Psoas muscle (tissue), 8 donors: ENCODE measurements at regions of chr17 and their contacts with region 1.

Region 1: GRCh38 chr17:53150101-53150698 is 672.5 kb upstream of the KIF2B start:
- DNase-seq: no peak
- ATAC-seq: peak in 1 of 4 donors; percentile 46
- H3K4me3 ChIP-seq: no peak overlapping the region
- H3K27ac ChIP-seq: no peak overlapping the region
- H3K4me1 ChIP-seq: no peaks in the 10 kb centered on the region
- H3K27me3 ChIP-seq: no peaks in the 10 kb centered on the region
- CTCF ChIP-seq: peak; percentile 53

Region 2: GRCh38 chr17:52383493-52384100 is 766.6 kb before region 1 on chr17:
- intact Hi-C with region 1: loop called in 1 of 2 experiments (anchors 5 kb)
- DNase-seq: no peak
- ATAC-seq: peak; percentile 62 to 85 (median 76)
- H3K4me3 ChIP-seq: no peak overlapping the region
- H3K27ac ChIP-seq: no peak overlapping the region
- H3K4me1 ChIP-seq: no peaks in the 10 kb centered on the region
- H3K27me3 ChIP-seq: no peaks in the 10 kb centered on the region
- CTCF ChIP-seq: peak; percentile 66

Region 3: GRCh38 chr17:52837492-52838272 is 312.5 kb before region 1 on chr17:
- intact Hi-C with region 1: no loop called
- DNase-seq: no peak
- ATAC-seq: no peak
- H3K4me3 ChIP-seq: no peak overlapping the region
- H3K27ac ChIP-seq: no peak overlapping the region
- H3K4me1 ChIP-seq: no peaks in the 10 kb centered on the region
- H3K27me3 ChIP-seq: no peaks in the 10 kb centered on the region
- CTCF ChIP-seq: no peak

Region 4: GRCh38 chr17:53012364-53012763 is 137.8 kb before region 1 on chr17:
- intact Hi-C with region 1: no loop called
- DNase-seq: no peak
- ATAC-seq: no peak
- H3K4me3 ChIP-seq: no peak overlapping the region
- H3K27ac ChIP-seq: no peak overlapping the region
- H3K4me1 ChIP-seq: no peaks in the 10 kb centered on the region
- H3K27me3 ChIP-seq: no peaks in the 10 kb centered on the region
- CTCF ChIP-seq: no peak

Region 5: GRCh38 chr17:53032861-53033271 is 117.3 kb before region 1 on chr17:
- intact Hi-C with region 1: loop called (anchors 2 to 5 kb)
- DNase-seq: no peak
- ATAC-seq: peak; percentile 56 to 80 (median 66)
- H3K4me3 ChIP-seq: no peak overlapping the region
- H3K27ac ChIP-seq: no peak overlapping the region
- H3K4me1 ChIP-seq: no peaks in the 10 kb centered on the region
- H3K27me3 ChIP-seq: no peaks in the 10 kb centered on the region
- CTCF ChIP-seq: peak; percentile 62

Region 6: DNA sequence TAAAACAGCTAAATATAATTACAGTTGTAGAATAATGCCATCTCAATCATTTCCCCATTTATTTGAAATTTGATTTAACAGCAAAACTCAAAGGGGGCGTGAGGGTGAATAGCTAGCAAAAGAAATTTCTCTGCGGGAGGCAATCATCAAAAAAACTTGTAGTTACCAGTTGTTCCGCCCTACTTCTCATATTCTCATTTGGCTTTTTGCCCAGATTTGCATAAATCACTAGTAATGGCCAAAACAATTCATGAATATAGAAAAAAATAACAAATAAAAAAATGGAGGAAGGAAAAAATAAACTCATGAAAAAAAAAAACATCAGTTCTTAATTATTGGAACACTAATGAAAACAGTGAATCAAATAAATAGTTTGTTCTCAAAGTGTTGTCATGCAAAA is 50.1 kb before region 1 on chr17:
- intact Hi-C with region 1: loop called in 1 of 2 experiments (anchors 5 kb)
- DNase-seq: no peak
- ATAC-seq: no peak
- H3K4me3 ChIP-seq: no peak overlapping the region
- H3K27ac ChIP-seq: no peak overlapping the region
- H3K4me1 ChIP-seq: no peaks in the 10 kb centered on the region
- H3K27me3 ChIP-seq: no peaks in the 10 kb centered on the region
- CTCF ChIP-seq: no peak